K562 (cell line): ENCODE measurements at regions of chr3 and their contacts with region 1.

Region 1: DNA sequence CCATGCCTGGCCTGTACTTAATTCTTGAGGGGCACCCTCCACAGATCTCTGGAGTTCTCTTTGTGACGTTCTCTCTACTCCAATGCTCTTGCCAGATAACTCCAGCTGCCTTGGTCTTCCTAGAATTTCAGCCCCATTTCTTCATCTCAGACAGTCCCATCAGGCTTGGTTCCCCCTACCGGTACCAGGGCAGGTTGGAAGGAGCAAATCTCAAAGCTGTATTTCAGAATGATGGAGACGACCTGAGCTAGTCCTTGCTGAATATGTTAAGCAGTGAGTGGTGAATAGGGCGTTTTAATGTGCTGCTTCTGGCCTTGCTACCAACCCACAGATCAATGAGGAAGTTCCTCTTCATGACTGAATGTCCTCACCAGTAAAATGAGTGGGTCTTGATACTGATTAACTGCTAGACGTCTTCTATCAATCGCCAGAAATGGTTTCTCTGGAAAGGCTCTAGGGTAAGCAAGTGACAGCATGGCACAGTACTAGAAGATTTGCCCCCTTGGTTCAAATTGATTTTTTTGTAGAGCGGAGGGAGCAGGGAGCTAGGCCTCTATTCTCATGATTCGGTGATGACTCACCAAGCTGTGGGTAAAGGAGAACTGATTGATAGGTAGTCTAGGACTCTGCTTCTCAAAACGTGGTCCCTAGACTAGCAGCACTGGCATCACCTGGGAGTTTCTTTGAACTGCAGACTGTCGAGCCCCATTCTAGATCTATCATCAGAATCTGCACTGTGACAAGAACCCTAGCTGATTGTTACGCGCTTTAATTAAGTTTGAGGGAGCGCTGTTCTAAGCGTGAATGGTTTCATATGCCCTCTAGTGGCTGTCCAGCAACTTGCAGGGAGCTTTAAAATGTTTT is 67.8 kb downstream of the UBP1 start:
- DNase-seq: peak; percentile 56 to 71 (median 68)
- ATAC-seq: peak; percentile 81
- H3K4me3 ChIP-seq: no peak overlapping the region
- H3K27ac ChIP-seq: no peak overlapping the region
- H3K4me1 ChIP-seq: no peaks in the 10 kb centered on the region; a peak in 2 of 5 replicates
- H3K27me3 ChIP-seq: no peaks in the 10 kb centered on the region
- CTCF ChIP-seq: peak; percentile 90 to 97 (median 95)
- EP300 ChIP-seq: no peak
- POLR2A ChIP-seq: no peak
- RAD21 ChIP-seq: peak; percentile 91 to 96

Region 2: GRCh38 chr3:31999907-32000439 is 1372.5 kb before region 1 on chr3:
- CTCF ChIA-PET with region 1: no interaction called
- POLR2A ChIA-PET with region 1: no interaction called
- in situ Hi-C with region 1: no loop called
- intact Hi-C with region 1: no loop called
- DNase-seq: no peak
- ATAC-seq: peak; percentile 33
- H3K4me3 ChIP-seq: no peak overlapping the region
- H3K27ac ChIP-seq: no peak overlapping the region
- H3K4me1 ChIP-seq: no peaks in the 10 kb centered on the region; a peak in 1 of 5 replicates
- H3K27me3 ChIP-seq: peaks cover 0 to 5% of the 10 kb centered on the region in 2 experiments; a peak in 2 of 5 replicates
- CTCF ChIP-seq: no peak
- EP300 ChIP-seq: no peak
- POLR2A ChIP-seq: no peak
- RAD21 ChIP-seq: no peak

Region 3: DNA sequence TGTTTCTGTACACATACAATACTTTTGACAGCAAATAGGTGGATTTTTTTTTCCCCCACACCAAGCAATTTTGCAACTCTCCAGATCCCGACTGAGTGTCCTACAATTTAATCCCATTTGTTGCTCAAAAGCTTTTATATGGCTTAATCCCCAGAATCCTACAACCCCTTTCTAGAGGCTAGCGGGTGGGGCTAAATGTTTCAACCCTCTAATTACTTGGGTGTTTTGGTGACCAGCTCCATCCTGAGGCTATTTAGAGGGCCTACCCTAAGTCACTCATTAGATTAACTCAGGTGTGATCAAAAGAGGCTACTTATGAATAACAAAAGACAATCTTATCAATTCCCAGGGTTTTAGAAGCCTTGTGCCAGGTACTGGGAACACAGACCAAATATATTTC is 116.2 kb before region 1 on chr3:
- CTCF ChIA-PET with region 1: no interaction called
- POLR2A ChIA-PET with region 1: no interaction called
- in situ Hi-C with region 1: no loop called
- intact Hi-C with region 1: loop called (anchors 5 kb)
- DNase-seq: no peak
- ATAC-seq: peak; percentile 39
- H3K4me3 ChIP-seq: no peak overlapping the region
- H3K27ac ChIP-seq: no peak overlapping the region
- H3K4me1 ChIP-seq: no peaks in the 10 kb centered on the region
- H3K27me3 ChIP-seq: no peaks in the 10 kb centered on the region
- CTCF ChIP-seq: no peak
- EP300 ChIP-seq: no peak
- POLR2A ChIP-seq: no peak
- RAD21 ChIP-seq: no peak

Region 4: DNA sequence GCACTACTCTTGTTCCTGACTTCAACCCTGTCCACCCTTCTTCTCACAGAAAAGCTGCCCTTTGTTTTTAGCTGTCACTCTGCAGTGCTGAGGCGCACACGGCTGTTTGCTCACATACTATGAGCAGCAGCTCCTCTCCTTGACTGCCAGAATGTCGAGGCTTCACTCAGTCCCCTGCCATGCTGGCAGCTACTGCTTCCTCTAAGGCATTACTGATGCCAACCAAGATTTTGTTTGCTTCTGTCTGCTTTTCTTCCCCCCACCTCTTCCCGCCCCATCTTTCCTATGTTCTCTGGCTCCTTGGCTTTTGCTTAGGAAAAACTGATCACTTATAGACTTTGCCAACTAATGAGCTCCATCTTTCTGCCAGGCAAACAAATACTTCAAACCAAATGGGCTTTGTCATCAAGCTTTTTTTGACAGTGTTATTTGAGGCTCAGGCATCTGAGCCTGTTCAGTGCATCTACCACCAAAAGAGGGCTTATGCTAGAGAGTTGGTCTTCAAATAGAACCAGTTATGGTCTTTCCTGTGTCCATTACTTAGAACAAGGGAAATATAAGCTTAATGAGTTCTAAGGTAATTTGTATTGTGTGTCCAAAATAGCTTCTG is 14.2 kb before region 1 on chr3:
- CTCF ChIA-PET with region 1: no interaction called
- POLR2A ChIA-PET with region 1: interaction called, 12 read pairs
- in situ Hi-C with region 1: no loop called
- intact Hi-C with region 1: no loop called
- DNase-seq: no peak
- ATAC-seq: peak; percentile 53
- H3K4me3 ChIP-seq: no peak overlapping the region
- H3K27ac ChIP-seq: no peak overlapping the region
- H3K4me1 ChIP-seq: peaks cover 0 to 20% of the 10 kb centered on the region in 2 experiments; a peak in 3 of 5 replicates
- H3K27me3 ChIP-seq: peaks cover 0 to 5% of the 10 kb centered on the region in 2 experiments; a peak in 1 of 5 replicates
- CTCF ChIP-seq: no peak
- EP300 ChIP-seq: no peak
- POLR2A ChIP-seq: no peak
- RAD21 ChIP-seq: no peak

Region 5: GRCh38 chr3:33385423-33385822 is 13.0 kb after region 1 on chr3:
- CTCF ChIA-PET with region 1: no interaction called
- POLR2A ChIA-PET with region 1: interaction called, 13 read pairs
- in situ Hi-C with region 1: no loop called
- intact Hi-C with region 1: no loop called
- DNase-seq: peak; percentile 63 to 89 (median 76)
- ATAC-seq: peak; percentile 99
- H3K4me3 ChIP-seq: no peak overlapping the region
- H3K27ac ChIP-seq: peak overlapping the region; percentile 69
- H3K4me1 ChIP-seq: peaks cover 0 to 15% of the 10 kb centered on the region in 2 experiments; a peak in 3 of 5 replicates
- H3K27me3 ChIP-seq: no peaks in the 10 kb centered on the region
- CTCF ChIP-seq: no peak
- EP300 ChIP-seq: peak; percentile 48; the same call in 1 of the 2 replicates
- POLR2A ChIP-seq: peak; percentile 52
- RAD21 ChIP-seq: no peak

Region 6: DNA sequence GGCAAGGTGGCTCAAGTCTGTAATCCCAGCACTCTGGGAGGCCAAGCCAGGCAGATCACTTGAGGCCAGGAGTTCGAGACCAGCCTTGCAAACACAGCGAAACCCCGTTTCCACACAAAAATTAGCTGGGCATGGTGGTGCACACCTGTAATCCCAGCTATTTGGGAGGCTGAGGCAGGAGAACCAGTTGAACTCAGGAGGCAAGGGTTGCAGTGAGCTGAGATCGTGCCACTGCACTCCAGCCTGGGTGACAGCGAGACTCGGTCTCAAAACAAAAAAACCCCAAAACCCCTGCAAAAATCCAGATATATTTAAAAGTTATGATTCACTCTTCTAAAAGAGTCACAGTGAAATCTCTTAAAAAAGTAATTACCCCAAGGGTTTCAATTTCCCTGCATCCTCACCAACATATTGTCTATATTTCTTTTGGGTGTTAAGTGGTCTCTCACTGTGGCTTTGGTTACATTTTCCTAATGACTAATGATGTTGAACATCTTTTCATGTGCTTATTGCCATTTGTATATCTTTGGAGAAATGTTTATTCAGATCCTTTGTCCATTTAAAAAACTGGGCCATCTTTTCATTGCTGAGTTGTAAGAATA is 140.9 kb after region 1 on chr3:
- CTCF ChIA-PET with region 1: no interaction called
- POLR2A ChIA-PET with region 1: no interaction called
- in situ Hi-C with region 1: no loop called
- intact Hi-C with region 1: no loop called
- DNase-seq: no peak
- ATAC-seq: no peak
- H3K4me3 ChIP-seq: no peak overlapping the region
- H3K27ac ChIP-seq: no peak overlapping the region
- H3K4me1 ChIP-seq: no peaks in the 10 kb centered on the region
- H3K27me3 ChIP-seq: no peaks in the 10 kb centered on the region
- CTCF ChIP-seq: no peak
- EP300 ChIP-seq: no peak
- POLR2A ChIP-seq: no peak
- RAD21 ChIP-seq: no peak